SK-N-SH (cell line): ENCODE measurements at regions of chr11 and their contacts with region 1.

Region 1: GRCh38 chr11:83836883-83837654 is 550.9 kb upstream of the CCDC90B start:
- DNase-seq: peak; percentile 69
- H3K4me3 ChIP-seq: no peak overlapping the region
- H3K27ac ChIP-seq: peak overlapping the region in 1 of 2 experiments; percentile 60; a peak in 1 of 4 replicates
- H3K4me1 ChIP-seq: peaks cover 0 to 6% of the 10 kb centered on the region in 2 experiments; a peak in 1 of 4 replicates
- H3K27me3 ChIP-seq: no peaks in the 10 kb centered on the region
- CTCF ChIP-seq: peak; percentile 84
- EP300 ChIP-seq: no peak
- RAD21 ChIP-seq: peak; percentile 98

Region 2: DNA sequence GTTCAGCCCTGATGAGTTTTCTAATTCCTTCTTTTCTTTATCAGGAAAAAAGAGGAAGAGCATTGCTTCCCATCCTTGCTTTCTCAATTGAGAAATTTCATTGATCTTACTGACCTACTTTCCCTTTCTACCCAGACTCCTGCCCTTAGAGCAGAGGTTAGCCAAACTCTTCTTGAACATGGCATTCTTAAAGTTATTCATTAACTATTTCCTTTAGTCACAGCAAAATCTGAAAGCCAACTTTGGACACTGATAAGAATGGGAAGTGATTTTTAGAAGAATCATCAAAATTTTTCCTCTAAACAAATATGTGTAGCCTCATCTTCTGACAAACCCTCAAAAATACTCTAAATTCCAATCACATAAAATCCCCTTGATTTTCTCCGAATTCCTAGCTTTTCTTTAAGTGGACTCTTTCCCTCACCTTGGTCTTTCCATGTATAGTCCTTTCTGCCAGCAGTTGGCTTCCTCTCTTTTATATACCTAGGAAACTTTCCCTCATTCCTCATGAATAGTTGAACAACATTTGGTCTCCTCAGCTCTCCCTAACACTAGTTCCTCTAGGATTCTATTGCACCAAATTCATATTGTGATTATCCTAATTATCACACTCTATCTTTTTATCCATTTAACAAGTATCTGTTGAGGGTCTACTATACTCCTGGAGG is 15.8 kb after region 1 on chr11:
- CTCF ChIA-PET with region 1: interaction called, 11 read pairs
- POLR2A ChIA-PET with region 1: no interaction called
- DNase-seq: no peak
- H3K4me3 ChIP-seq: no peak overlapping the region
- H3K27ac ChIP-seq: no peak overlapping the region
- H3K4me1 ChIP-seq: no peaks in the 10 kb centered on the region
- H3K27me3 ChIP-seq: no peaks in the 10 kb centered on the region
- CTCF ChIP-seq: no peak
- EP300 ChIP-seq: no peak
- RAD21 ChIP-seq: no peak

Region 3: DNA sequence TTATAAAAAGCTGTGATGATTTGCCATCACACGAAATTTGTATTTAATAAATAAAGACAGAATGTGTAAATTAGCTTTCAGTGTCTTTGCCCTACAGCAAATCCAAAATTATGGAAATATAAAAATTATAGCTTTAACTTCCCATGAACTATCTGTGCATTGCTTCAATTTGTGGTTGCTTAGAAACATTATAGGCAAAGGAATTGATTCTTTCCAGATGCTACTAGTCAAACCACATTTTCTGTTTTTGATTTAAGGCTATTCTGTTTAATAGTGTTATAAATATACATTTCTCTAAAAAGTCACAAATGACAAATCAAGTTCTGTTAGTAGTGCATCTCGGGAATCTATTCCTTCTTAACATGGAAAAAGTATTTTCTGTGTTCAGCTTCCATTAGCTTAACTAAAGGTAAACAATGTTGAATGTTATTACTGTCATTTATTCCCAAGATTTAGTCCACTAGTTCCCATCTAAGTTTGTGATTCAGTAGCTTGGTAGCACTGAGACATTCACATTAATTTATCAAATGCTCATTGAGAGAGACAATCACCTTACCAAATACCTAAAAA is 535.4 kb after region 1 on chr11:
- CTCF ChIA-PET with region 1: interaction called, 18 read pairs
- POLR2A ChIA-PET with region 1: no interaction called
- DNase-seq: no peak
- H3K4me3 ChIP-seq: no peak overlapping the region
- H3K27ac ChIP-seq: peak overlapping the region in 1 of 2 experiments; percentile 51; a peak in 2 of 4 replicates
- H3K4me1 ChIP-seq: no peaks in the 10 kb centered on the region; a peak in 1 of 4 replicates
- H3K27me3 ChIP-seq: no peaks in the 10 kb centered on the region
- CTCF ChIP-seq: no peak
- EP300 ChIP-seq: no peak
- RAD21 ChIP-seq: no peak

Region 4: DNA sequence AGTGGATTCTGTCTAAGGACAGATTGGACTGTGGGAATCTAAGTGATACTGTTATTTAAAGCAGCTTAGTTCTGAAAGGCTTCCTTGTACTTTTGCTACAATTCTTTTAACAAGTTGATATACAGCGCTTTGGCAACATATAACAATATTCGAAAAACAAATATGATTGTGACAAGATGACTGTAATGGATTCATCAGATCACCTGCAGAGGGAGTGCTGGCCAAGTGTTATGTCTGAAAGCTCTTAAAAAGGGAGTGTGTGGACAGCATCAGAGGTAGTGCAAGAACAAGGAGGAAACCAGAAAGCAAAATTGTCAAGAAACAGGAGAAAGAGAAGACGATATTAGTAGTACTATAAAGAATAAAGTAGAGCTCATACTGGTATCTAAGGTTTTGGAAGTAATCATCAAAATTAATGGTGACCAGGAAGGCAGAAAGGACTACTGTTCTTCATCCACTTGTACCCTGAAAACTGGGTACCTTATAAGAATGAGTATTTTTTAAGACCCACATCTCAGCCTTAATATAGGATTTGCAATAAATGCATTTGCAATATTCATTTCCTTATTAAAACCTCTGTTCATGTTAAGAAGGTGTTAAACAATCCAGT is 561.1 kb after region 1 on chr11:
- CTCF ChIA-PET with region 1: interaction called, 15 read pairs
- POLR2A ChIA-PET with region 1: no interaction called
- DNase-seq: peak; percentile 28
- H3K4me3 ChIP-seq: no peak overlapping the region
- H3K27ac ChIP-seq: no peak overlapping the region
- H3K4me1 ChIP-seq: no peaks in the 10 kb centered on the region
- H3K27me3 ChIP-seq: no peaks in the 10 kb centered on the region
- CTCF ChIP-seq: peak; percentile 70
- EP300 ChIP-seq: no peak
- RAD21 ChIP-seq: peak; percentile 80

Region 5: DNA sequence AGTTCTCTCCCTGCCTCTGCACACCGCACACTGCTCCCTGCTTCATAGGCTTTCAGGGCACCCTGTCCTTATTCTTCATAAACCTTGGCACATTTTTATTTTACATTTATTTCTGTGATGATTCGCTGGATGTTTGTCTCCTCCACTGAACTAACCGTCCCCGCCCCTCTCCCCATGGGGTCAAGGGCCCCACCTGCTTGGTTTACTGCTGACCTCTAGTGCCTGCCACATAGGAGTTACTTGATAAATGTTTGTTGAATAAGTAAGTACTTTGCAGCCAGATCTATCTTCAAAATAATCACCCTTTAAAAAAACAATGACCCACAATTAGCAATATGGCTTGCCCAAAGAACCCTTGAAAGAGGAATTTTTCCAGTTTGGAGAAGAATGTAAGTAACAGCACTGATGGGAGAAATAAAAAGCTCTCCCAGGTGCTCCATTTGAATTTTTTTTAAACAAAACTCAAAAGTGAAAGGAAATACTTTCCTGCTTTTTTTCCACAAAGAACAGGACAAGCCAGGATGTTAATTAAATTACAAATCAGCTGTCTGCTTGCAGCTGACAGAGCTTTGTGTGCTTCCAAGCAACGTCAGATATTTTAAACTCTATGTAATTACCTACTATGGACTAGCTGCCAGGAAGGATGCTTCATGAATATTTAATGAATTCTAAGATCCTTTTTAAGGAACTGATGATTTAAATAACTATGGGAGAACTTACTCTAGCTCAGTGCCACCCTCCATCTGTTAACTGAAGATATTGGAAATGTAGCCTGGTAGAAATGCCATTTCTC is 706.5 kb after region 1 on chr11:
- CTCF ChIA-PET with region 1: interaction called, 12 read pairs
- POLR2A ChIA-PET with region 1: no interaction called
- DNase-seq: peak; percentile 8
- H3K4me3 ChIP-seq: no peak overlapping the region
- H3K27ac ChIP-seq: peak overlapping the region in 1 of 2 experiments; percentile 58; a peak in 2 of 4 replicates
- H3K4me1 ChIP-seq: peaks cover 8 to 9% of the 10 kb centered on the region in 2 experiments; a peak in 3 of 4 replicates
- H3K27me3 ChIP-seq: no peaks in the 10 kb centered on the region
- CTCF ChIP-seq: no peak
- EP300 ChIP-seq: no peak
- RAD21 ChIP-seq: peak; percentile 33; the same call in 1 of the 2 replicates